Activated CD4-positive, alpha-beta T cell treated with anti-CD3 and anti-CD28 coated beads, Interleukin-2, amount 10 ng/mL, durations not matched to agents 24 days and 14 days (primary cell): ENCODE measurements at regions of chr4 and their contacts with region 1.

Region 1: DNA sequence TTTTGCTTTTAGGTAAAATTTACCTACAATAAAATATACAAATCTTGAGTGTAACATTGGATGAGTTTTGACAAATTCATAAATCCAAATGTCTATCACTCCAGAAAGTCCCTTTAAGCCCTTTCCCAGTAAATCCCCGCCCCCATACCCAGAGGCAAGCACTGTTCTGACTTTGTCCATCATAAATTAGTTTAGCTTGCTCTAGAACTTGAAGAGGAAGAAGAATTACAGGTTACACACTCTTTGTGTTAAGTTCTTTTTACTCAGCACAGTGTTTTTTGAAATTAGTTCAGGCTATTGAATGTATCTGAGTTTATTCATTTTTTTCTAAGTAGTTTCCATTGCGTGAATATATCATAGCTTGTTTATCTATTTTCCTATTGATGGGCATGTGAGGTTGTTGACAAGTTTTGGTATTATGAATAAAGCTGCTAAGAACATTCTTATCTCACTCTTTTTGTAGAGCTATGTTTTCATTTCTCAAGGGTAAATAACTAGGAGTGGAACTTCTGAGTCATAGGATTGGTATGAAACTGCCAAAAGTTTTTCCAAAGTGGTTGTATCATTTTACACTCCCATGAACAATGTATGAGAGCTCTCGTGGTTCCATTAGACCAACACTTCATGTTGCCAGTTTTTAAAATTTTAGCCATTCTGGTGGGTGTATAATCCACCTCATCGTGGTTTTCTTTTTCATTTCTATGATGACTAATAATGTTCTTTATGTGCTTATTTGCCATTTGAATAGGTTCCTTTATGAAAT is 22.4 kb upstream of the HPSE start:
- DNase-seq: no peak
- H3K4me3 Mint-ChIP-seq: peak overlapping the region; percentile 22
- H3K27ac Mint-ChIP-seq: peak overlapping the region; percentile 96
- H3K4me1 Mint-ChIP-seq: peaks cover 15% of the 10 kb centered on the region
- H3K27me3 Mint-ChIP-seq: no peaks in the 10 kb centered on the region

Region 2: DNA sequence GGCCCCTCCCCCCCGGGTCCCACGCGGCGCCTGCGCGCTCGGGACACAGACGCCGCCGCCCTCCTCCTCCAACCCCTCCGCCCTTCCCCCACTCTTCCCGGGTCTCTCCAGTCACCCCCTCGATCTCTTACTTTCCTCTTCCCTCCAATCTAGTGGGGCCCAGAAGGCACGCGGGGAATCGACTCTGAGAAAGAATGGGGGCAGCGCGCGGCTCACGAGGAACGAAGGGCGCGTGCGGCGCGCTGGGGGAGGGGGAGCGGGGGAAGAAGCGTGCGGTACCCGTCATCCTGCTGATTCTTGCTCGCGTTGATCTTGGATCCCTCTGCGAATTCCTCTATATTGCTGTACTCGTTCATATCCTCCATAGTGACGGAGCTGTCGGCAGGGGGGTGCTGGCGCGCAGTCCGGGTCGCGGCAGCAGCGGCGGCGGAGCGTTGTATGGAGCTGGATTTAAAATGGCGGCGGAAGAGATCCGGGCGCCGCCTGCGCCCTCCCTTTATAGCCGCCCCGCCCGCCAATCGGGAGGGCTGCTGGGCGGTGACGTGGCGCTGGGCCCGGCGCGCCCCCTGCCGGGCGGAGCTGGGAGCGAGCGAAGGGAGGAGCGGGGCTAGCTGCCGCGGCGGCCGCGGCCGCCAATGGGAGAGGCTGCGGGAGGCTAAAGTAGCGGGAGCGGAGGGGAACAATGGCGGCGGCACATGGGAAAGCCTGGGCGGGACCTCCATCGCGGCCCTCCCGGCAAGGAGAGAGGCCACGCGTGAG is 927.9 kb before region 1 on chr4:
- intact Hi-C with region 1: loop called (anchors 5 kb)
- DNase-seq: peak; percentile 98
- H3K4me3 Mint-ChIP-seq: peak overlapping the region; percentile 96
- H3K27ac Mint-ChIP-seq: peak overlapping the region; percentile 99
- H3K4me1 Mint-ChIP-seq: peaks cover 61% of the 10 kb centered on the region
- H3K27me3 Mint-ChIP-seq: no peaks in the 10 kb centered on the region

Region 3: GRCh38 chr4:83189631-83190136 is 167.4 kb before region 1 on chr4:
- intact Hi-C with region 1: no loop called
- DNase-seq: no peak
- H3K4me3 Mint-ChIP-seq: no peak overlapping the region
- H3K27ac Mint-ChIP-seq: no peak overlapping the region
- H3K4me1 Mint-ChIP-seq: peaks cover 2% of the 10 kb centered on the region
- H3K27me3 Mint-ChIP-seq: no peaks in the 10 kb centered on the region

Region 4: DNA sequence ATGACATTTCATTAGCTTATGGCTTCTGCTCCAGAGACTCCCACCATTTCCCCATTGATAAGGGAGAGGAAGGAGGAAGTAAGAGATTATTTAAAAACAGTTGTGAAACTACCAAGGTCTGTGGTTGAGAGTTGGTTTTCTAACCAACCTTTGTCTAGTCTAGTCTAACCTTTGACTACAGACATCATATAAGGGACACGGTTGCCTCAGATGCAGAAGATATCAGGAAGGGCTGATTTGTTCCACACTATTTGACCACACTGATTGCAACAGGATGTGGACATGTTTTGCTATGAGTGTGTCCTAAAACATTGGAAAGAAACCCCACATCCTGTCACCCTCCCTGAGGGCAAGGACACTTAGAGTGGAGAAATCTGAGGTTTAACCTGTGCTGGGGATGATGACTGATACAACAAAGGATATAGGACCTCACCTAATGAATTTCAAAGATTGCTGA is 125.4 kb before region 1 on chr4:
- intact Hi-C with region 1: loop called (anchors 1 kb)
- DNase-seq: peak; percentile 89
- H3K4me3 Mint-ChIP-seq: peak overlapping the region; percentile 48
- H3K27ac Mint-ChIP-seq: peak overlapping the region; percentile 52
- H3K4me1 Mint-ChIP-seq: peaks cover 55% of the 10 kb centered on the region
- H3K27me3 Mint-ChIP-seq: peaks cover 6% of the 10 kb centered on the region

Region 5: DNA sequence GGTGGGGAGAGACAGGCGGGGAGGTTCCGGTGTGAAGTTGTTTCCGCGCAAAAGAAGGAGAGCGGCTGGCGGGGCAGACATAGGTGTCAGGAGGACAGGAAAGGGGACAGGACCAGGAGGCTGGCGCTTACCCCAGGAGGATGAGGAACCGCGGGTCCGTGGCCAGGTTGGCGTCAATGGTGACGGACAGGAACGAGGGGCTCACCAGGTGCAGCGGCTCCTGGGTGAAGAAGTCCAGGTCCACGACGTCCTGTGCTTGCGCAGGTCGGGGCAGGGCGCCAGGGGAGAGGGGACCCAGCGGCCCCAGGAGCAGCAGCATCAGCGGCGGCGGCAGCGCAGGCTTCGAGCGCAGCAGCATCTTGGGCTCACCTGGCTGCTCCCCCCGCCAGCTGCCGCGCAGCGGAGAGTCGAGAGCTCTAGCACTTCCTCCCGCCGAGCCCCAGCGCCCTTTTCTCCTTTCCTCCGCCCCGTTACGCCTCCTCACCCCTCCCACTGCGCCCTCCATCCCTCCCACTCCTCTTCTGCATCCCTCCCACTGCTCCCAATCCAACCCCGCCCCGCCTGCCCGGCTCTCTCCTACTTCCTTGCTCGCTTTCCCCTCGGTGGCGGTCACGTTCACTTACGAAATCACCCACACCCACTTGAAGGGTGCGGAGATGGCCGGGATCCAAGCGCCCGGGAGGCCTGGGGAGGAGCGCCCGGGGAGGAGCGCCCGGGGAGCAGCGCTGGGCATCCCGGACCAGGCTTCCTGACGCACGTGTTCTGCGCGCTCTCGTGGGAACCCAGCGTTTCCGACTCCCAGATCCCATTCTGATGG is 22.4 kb before region 1 on chr4 and contains the start of gene HPSE:
- intact Hi-C with region 1: loop called (anchors 1 kb)
- DNase-seq: peak; percentile 93
- H3K4me3 Mint-ChIP-seq: peak within 1 kb of the TSS; percentile 88
- H3K27ac Mint-ChIP-seq: peak within 1 kb of the TSS; percentile 62
- H3K4me1 Mint-ChIP-seq: peaks cover 29% of the 10 kb centered on the region
- H3K27me3 Mint-ChIP-seq: peaks cover 20% of the 10 kb centered on the region
- total RNA-seq, gene HPSE: 17.7 and 19.8 TPM in 2 replicates

Region 6: GRCh38 chr4:83455281-83456129 is 98.4 kb after region 1 on chr4 and contains the starts of genes HELQ and MRPS18C:
- intact Hi-C with region 1: loop called (anchors 1 kb)
- DNase-seq: peak; percentile 98
- H3K4me3 Mint-ChIP-seq: peak within 1 kb of the TSS; percentile 99
- H3K27ac Mint-ChIP-seq: peak within 1 kb of the TSS; percentile 100
- H3K4me1 Mint-ChIP-seq: peaks cover 26% of the 10 kb centered on the region
- H3K27me3 Mint-ChIP-seq: no peaks in the 10 kb centered on the region
- total RNA-seq, gene HELQ: 9.1 and 11.4 TPM in 2 replicates
- total RNA-seq, gene MRPS18C: 83.9 and 86.6 TPM in 2 replicates